PC-3 (cell line): ENCODE measurements at regions of chr7 and their contacts with region 1.

Region 1: DNA sequence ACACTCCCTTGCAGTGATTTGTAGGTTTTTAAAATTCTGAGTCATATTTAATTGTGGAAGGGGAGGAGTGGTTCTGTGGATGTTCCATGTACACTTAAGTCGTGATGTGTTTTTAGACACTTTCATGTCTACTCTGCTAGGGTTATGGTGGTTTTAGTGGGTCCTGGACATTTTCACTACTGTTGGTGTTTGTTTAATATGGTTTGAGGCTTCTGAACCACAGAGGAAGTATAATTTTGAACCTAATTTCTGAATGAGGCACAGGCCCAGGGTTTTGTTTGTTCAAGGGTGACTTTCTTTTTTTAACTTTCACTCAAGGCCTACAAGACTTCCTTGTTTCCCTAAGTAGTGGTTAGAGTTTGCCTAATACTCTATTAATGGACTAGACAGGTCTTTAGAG is 13.3 kb downstream of the SLC26A5 start:
- DNase-seq: peak; percentile 60
- ATAC-seq: peak; percentile 93
- H3K4me3 ChIP-seq: peak overlapping the region; percentile 36; the same call in 1 of the 2 replicates
- H3K27ac ChIP-seq: peak overlapping the region; percentile 70
- H3K4me1 ChIP-seq: peaks cover 22% of the 10 kb centered on the region
- H3K27me3 ChIP-seq: no peaks in the 10 kb centered on the region
- CTCF ChIP-seq: no peak

Region 2: GRCh38 chr7:103392018-103392417 is 40.7 kb before region 1 on chr7:
- CTCF ChIA-PET with region 1: no interaction called
- POLR2A ChIA-PET with region 1: no interaction called
- intact Hi-C with region 1: loop called (anchors 1 kb)
- DNase-seq: peak; percentile 88
- ATAC-seq: peak; percentile 95
- H3K4me3 ChIP-seq: peak overlapping the region; percentile 29; the same call in 1 of the 2 replicates
- H3K27ac ChIP-seq: peak overlapping the region; percentile 82
- H3K4me1 ChIP-seq: peaks cover 24% of the 10 kb centered on the region
- H3K27me3 ChIP-seq: no peaks in the 10 kb centered on the region
- CTCF ChIP-seq: no peak